Activated CD4-positive, alpha-beta T cell treated with anti-CD3 and anti-CD28 coated beads for 36 hours (primary cell): ENCODE measurements at regions of chr3 and their contacts with region 1.

Region 1: GRCh38 chr3:112013058-112013783 is 14.5 kb downstream of the TAGLN3 start:
- DNase-seq: peak; percentile 82
- ATAC-seq: peak; percentile 96
- H3K4me3 Mint-ChIP-seq: no peak overlapping the region
- H3K27ac Mint-ChIP-seq: peak overlapping the region; percentile 29
- H3K4me1 Mint-ChIP-seq: peaks cover 20% of the 10 kb centered on the region
- H3K27me3 Mint-ChIP-seq: no peaks in the 10 kb centered on the region

Region 2: DNA sequence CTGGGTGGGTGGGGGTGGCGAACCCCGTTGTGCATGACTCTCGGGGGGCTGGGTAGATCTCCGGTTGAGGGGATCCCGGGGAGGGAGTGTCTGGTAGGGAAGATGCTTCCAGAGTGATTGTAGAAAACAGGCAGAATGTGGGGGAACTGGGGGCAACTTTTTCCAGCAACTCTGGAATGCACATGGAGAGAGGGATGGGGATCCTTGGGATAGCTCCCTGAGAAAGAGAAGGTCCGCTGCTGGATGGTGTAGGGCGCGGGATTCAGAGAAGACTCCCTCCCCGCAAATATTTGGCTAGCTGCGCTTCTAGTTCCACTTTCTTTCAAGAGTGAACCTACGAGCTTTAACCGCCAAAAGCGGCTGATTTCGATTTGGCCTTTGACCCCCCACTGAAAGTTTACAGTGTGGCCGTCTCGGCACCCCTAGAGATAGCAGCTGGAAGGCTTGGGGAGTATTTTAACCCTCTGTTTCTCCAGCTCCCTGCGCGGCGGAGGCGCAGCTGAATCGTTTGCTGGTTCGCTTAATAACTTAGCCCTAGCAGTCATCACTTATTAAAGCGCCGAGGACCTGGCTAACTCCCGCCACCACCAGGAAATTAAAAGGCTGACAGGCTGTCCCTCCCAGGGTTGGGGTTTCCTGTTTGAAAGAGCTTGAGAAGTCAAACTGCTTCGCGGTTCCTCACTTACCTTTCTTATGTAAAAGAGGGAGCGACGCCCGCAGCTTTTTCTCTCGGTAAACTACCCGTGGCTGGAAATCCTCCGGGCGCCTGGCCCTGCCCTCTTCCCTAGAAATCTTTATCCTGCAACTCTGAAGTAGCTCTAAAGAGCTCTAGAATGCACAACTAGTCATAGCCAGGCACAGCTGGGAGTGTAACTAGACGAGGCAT is 153.0 kb before region 1 on chr3:
- CTCF ChIA-PET with region 1: interaction called, 10 read pairs
- POLR2A ChIA-PET with region 1: no interaction called
- intact Hi-C with region 1: no loop called
- DNase-seq: peak; percentile 66
- ATAC-seq: peak; percentile 66
- H3K4me3 Mint-ChIP-seq: peak overlapping the region; percentile 82
- H3K27ac Mint-ChIP-seq: peak overlapping the region; percentile 29
- H3K4me1 Mint-ChIP-seq: peaks cover 11% of the 10 kb centered on the region
- H3K27me3 Mint-ChIP-seq: peaks cover 36% of the 10 kb centered on the region

Region 3: DNA sequence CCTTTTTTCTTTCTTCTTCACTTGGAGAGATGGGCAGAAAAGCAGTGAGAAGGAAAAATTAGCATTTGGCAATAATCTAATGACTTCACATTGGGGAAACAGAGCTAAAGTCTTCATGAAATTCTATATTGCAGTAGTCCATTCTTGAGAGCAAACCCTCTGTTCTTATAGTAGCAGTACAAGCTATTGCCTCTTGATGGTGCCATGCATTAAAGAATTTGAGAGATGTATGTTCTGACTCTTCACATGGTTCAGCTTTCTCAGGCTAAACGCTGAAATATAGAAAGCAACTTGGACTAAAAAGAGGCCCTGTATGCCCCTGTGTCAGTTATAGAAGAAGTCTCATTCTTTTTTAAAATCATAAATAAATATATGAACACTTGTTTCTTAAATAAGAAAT is 118.1 kb before region 1 on chr3:
- CTCF ChIA-PET with region 1: interaction called, 8 read pairs
- POLR2A ChIA-PET with region 1: no interaction called
- intact Hi-C with region 1: loop called in 1 of 2 experiments (anchors 10 kb)
- DNase-seq: no peak
- ATAC-seq: peak; percentile 47
- H3K4me3 Mint-ChIP-seq: no peak overlapping the region
- H3K27ac Mint-ChIP-seq: no peak overlapping the region
- H3K4me1 Mint-ChIP-seq: no peaks in the 10 kb centered on the region
- H3K27me3 Mint-ChIP-seq: no peaks in the 10 kb centered on the region

Region 4: GRCh38 chr3:111978493-111979433 is 34.5 kb before region 1 on chr3 and contains the start of gene ABHD10:
- CTCF ChIA-PET with region 1: interaction called, 61 read pairs
- POLR2A ChIA-PET with region 1: interaction called, 5 read pairs
- intact Hi-C with region 1: no loop called
- DNase-seq: peak; percentile 98
- ATAC-seq: peak; percentile 97
- H3K4me3 Mint-ChIP-seq: peak within 1 kb of the TSS; percentile 87
- H3K27ac Mint-ChIP-seq: peak within 1 kb of the TSS; percentile 93
- H3K4me1 Mint-ChIP-seq: peaks cover 40% of the 10 kb centered on the region
- H3K27me3 Mint-ChIP-seq: no peaks in the 10 kb centered on the region
- total RNA-seq, gene ABHD10: 58.7 to 64.1 TPM

Region 5: DNA sequence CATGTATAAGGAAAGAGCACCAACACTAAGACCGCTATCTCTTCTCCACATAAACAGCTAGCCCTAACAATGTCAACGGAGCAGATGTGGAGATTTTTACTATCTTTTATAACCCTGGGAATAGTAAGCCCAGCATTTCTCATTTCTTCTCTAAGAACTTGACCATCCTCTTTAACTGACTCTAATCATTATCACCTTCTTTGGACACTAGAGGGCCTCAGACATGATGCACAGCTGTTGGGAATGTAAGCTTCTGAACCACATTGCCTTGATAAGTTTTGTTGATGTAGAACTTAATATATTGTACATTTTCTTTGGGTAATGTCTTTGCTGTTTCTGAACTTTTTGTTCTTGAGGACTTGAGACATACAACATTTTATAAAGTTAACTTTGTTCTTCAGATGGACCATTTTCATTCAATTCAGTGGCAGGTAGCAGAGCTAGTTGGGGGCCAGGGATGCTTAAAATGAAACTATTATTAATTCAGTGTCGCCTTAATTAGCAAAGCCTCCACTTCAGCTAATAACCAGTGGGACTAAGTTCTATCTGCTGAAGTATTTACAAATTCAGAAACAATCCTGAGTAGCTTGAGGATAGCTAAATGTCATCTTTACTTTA is 24.1 kb before region 1 on chr3:
- CTCF ChIA-PET with region 1: interaction called, 515 read pairs
- POLR2A ChIA-PET with region 1: no interaction called
- intact Hi-C with region 1: loop called (anchors 1 kb)
- DNase-seq: no peak
- ATAC-seq: peak; percentile 69
- H3K4me3 Mint-ChIP-seq: no peak overlapping the region
- H3K27ac Mint-ChIP-seq: no peak overlapping the region
- H3K4me1 Mint-ChIP-seq: peaks cover 36% of the 10 kb centered on the region
- H3K27me3 Mint-ChIP-seq: no peaks in the 10 kb centered on the region

Region 6: GRCh38 chr3:111998636-111999483 is 14.4 kb before region 1 on chr3 and contains the start of gene TAGLN3:
- CTCF ChIA-PET with region 1: interaction called, 515 read pairs
- POLR2A ChIA-PET with region 1: interaction called, 3 read pairs
- intact Hi-C with region 1: loop called in 1 of 2 experiments (anchors 1 kb)
- DNase-seq: peak; percentile 47
- ATAC-seq: peak; percentile 14
- H3K4me3 Mint-ChIP-seq: peak within 1 kb of the TSS; percentile 69
- H3K27ac Mint-ChIP-seq: peak within 1 kb of the TSS; percentile 44
- H3K4me1 Mint-ChIP-seq: peaks cover 47% of the 10 kb centered on the region
- H3K27me3 Mint-ChIP-seq: no peaks in the 10 kb centered on the region
- total RNA-seq, gene TAGLN3: 3.2 to 3.5 TPM

Region 7: GRCh38 chr3:112043603-112044201 is 30.5 kb after region 1 on chr3:
- CTCF ChIA-PET with region 1: interaction called, 25 read pairs
- POLR2A ChIA-PET with region 1: no interaction called
- intact Hi-C with region 1: no loop called
- DNase-seq: peak; percentile 69
- ATAC-seq: peak; percentile 96
- H3K4me3 Mint-ChIP-seq: no peak overlapping the region
- H3K27ac Mint-ChIP-seq: no peak overlapping the region
- H3K4me1 Mint-ChIP-seq: peaks cover 4% of the 10 kb centered on the region
- H3K27me3 Mint-ChIP-seq: no peaks in the 10 kb centered on the region

Region 8: GRCh38 chr3:112199619-112200316 is 186.5 kb after region 1 on chr3:
- CTCF ChIA-PET with region 1: no interaction called
- POLR2A ChIA-PET with region 1: no interaction called
- intact Hi-C with region 1: no loop called
- DNase-seq: no peak
- ATAC-seq: no peak
- H3K4me3 Mint-ChIP-seq: no peak overlapping the region
- H3K27ac Mint-ChIP-seq: no peak overlapping the region
- H3K4me1 Mint-ChIP-seq: no peaks in the 10 kb centered on the region
- H3K27me3 Mint-ChIP-seq: peaks cover 3% of the 10 kb centered on the region

Region 9: DNA sequence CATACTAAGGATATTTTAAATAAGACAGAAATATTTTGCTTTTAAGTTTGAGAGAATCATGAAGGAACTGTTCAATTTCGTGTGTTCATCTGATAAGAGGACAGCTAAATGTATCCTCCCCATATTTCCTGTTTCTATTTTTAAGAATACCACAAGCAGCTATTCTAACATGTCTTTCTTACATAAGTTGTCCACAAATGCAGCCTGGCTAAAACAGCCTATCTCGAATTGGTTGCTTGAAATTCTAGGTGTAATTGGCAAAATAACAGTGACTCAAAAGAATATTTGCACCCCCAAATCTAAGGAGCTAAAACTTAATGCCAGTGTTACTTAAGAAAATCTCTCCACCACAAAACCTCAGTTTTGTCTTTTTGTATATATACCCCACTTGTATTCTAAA is 451.0 kb after region 1 on chr3:
- CTCF ChIA-PET with region 1: no interaction called
- POLR2A ChIA-PET with region 1: no interaction called
- intact Hi-C with region 1: no loop called
- DNase-seq: no peak
- ATAC-seq: no peak
- H3K4me3 Mint-ChIP-seq: no peak overlapping the region
- H3K27ac Mint-ChIP-seq: peak overlapping the region; percentile 52
- H3K4me1 Mint-ChIP-seq: peaks cover 82% of the 10 kb centered on the region
- H3K27me3 Mint-ChIP-seq: no peaks in the 10 kb centered on the region